Sigmoid colon (tissue), 7 donors: ENCODE measurements at regions of chr3 and their contacts with region 1.

Region 1: DNA sequence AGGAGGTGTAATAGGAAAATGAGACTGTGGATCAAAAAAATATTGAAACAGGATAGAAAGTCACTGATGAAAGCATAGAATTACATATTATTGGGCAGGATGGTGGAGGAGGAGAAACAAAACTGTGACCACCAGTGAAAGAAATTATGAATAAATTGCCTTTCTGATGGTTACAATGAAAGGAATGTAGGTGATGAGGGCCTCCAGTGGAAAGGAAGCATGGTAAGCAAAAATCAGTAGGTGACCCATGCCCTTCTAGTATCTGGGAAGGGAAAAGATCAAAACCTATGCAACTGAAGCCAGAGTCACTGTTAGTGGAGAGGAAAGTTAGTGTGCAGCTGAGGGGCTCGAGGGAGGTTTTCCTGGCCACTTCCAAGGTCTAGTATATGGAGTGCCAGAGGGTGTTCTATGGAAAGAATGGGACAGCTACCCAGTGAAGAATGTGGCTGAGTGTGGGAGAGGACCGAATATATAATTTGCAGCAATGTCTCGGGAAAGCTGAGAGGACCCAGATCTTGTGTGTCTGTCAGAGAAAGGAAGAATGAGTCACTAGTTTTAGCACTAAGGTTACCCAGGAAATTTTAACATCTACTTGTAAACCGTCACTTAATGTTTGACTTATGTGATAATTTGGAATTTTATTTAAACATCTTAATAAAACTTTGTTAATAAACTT is 146.2 kb downstream of the NFKBIZ start:
- DNase-seq: no peak
- H3K4me3 ChIP-seq: no peak overlapping the region
- H3K27ac ChIP-seq: peak overlapping the region in 1 of 4 donors; percentile 41
- H3K4me1 ChIP-seq: peaks cover 0 to 24% (median 14%) of the 10 kb centered on the region in 4 donors
- H3K27me3 ChIP-seq: no peaks in the 10 kb centered on the region
- CTCF ChIP-seq: no peak
- EP300 ChIP-seq: no peak
- POLR2A ChIP-seq: no peak

Region 2: DNA sequence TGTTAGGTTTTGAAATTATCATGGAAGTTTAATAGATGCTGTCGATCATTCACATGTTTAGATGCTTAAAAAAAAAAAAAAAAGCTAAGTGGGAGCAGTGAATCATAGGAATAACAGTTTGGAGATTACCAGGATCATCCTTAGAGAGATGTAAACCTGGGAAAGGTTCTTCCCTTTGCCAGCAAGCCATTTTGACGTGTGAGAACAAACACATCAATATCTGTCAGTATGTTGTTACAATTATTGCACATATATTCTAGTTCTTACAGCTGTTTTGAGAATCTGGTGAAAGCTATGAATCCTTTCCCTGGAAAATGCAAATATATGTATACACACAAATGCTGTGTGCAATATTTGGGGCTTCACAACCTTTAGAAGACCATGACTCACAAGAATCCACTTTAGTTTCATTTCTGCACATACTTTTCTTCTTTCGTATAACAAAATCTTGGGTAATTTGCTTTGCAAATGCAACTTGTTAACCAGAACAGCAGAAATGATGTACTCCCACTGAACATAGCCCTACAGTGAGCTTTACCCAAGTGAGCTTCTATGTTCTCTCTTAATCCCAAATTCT is 134.2 kb before region 1 on chr3:
- intact Hi-C with region 1: no loop called
- DNase-seq: no peak
- H3K4me3 ChIP-seq: no peak overlapping the region
- H3K27ac ChIP-seq: no peak overlapping the region
- H3K4me1 ChIP-seq: peaks cover 0 to 10% (median 0%) of the 10 kb centered on the region in 4 donors
- H3K27me3 ChIP-seq: no peaks in the 10 kb centered on the region
- CTCF ChIP-seq: no peak
- EP300 ChIP-seq: no peak
- POLR2A ChIP-seq: no peak

Region 3: DNA sequence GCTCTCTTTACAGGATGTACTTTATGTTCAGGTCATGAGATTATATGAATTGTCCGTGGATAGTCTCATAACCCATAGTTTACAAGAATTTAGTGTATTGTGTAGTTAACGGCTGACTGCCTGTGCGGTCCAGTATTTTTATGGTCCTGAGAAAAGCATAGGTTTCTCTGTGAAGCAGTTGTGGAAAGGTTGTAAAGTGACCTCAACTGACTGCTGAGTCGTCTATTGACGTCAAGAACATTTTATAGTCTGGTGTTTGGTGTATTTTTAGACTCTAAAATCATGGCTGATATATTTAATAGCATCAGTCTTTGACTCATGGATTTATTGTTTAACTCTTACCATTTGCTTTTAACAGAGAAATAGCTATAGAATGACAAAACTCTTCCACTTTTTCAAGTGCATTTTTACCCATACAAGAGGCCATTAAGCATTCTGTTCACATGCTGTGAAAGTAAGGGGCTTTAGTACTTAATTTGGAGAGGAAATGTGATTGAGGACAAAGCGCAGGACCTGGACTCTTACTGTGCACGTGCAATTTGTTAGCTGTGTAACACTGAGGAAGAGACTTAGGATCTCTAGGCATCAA is 94.5 kb after region 1 on chr3:
- intact Hi-C with region 1: no loop called
- DNase-seq: no peak
- H3K4me3 ChIP-seq: no peak overlapping the region
- H3K27ac ChIP-seq: peak overlapping the region in 3 of 4 donors; percentile 56 to 81 (median 64)
- H3K4me1 ChIP-seq: peaks cover 0 to 52% (median 40%) of the 10 kb centered on the region in 4 donors
- H3K27me3 ChIP-seq: no peaks in the 10 kb centered on the region
- CTCF ChIP-seq: no peak
- EP300 ChIP-seq: peak; percentile 89 to 98 (median 96)
- POLR2A ChIP-seq: no peak

Region 4: GRCh38 chr3:102206511-102207031 is 211.1 kb after region 1 on chr3:
- intact Hi-C with region 1: loop called (anchors 5 kb)
- DNase-seq: peak; percentile 96
- H3K4me3 ChIP-seq: no peak overlapping the region
- H3K27ac ChIP-seq: peak overlapping the region; percentile 39 to 73 (median 62)
- H3K4me1 ChIP-seq: peaks cover 0 to 22% (median 18%) of the 10 kb centered on the region in 4 donors
- H3K27me3 ChIP-seq: no peaks in the 10 kb centered on the region
- CTCF ChIP-seq: no peak
- EP300 ChIP-seq: peak in 3 of 4 donors; percentile 39 to 76 (median 40)
- POLR2A ChIP-seq: no peak